Right cardiac atrium (tissue), 5 donors: ENCODE measurements at regions of chrX and their contacts with region 1.

Region 1: DNA sequence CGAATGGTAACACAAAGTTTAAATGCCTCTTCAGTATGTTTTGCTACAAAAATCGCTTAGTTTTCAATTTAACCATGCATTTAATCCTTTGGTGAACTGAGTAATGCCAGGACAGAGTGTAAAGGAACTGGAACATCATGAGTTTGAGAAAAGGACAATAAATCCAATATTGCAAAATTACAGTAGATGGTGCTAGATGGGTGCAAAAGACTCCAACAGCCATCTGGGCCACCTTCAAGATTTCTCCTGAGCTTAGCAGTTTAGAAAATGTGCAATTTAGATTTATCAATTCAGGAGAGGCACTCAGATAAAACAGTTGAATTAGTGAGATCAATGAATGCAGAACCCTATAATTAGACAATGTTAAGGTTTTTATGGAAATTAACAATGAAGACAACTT is 33.2 kb upstream of the MID1IP1 start:
- DNase-seq: no peak
- ATAC-seq: peak in 1 of 2 donors; percentile 50
- H3K4me3 ChIP-seq: no peak overlapping the region
- H3K27ac ChIP-seq: no peak overlapping the region
- H3K4me1 ChIP-seq: no peaks in the 10 kb centered on the region
- H3K27me3 ChIP-seq: no peaks in the 10 kb centered on the region

Region 2: DNA sequence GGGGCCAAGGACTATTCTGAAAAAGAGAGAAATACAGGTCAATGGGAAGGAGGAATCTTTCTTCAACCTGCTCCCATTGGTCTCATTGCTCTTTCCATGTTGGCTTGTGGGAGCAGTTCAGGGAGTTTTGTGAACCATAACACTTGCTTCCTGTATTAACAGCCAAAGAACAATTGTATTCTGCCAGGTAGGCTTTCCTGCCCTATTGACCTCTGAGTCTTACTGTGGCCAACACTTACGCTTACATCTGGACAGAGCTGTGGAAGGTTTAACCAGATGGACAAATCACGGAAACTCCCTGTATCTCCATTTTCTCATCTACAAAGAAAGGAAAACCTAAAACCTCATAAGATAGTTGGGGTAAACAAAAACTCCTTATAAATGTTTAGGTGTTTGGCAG is 63.9 kb after region 1 on chrX:
- intact Hi-C with region 1: no loop called
- DNase-seq: no peak
- ATAC-seq: no peak
- H3K4me3 ChIP-seq: no peak overlapping the region
- H3K27ac ChIP-seq: no peak overlapping the region
- H3K4me1 ChIP-seq: no peaks in the 10 kb centered on the region
- H3K27me3 ChIP-seq: no peaks in the 10 kb centered on the region

Region 3: GRCh38 chrX:38985375-38985774 is 217.3 kb after region 1 on chrX:
- intact Hi-C with region 1: loop called in 1 of 4 experiments (anchors 10 kb)
- DNase-seq: no peak
- ATAC-seq: no peak
- H3K4me3 ChIP-seq: no peak overlapping the region
- H3K27ac ChIP-seq: no peak overlapping the region
- H3K4me1 ChIP-seq: peaks cover 3% of the 10 kb centered on the region
- H3K27me3 ChIP-seq: no peaks in the 10 kb centered on the region

Region 4: DNA sequence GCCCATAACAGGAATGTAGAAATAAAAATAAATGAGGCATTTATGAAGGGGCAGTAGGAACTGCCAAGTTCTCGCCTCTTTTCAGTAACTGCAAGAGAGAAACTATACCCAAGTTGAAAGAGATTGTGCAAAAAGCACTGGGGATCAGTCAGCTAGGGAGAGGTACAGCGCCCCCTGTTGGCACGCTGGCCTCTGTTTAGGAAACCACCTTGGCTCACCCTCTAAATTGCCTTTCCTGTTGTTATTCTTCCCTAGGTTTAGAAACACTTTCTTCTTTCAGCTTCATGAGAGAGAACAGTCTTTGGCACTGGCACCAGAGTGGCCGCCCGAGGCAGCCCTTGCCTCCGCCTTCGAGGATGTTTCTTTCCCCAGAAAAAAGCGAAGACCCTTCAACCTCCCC is 381.7 kb after region 1 on chrX:
- intact Hi-C with region 1: loop called in 2 of 4 experiments (anchors 10 kb)
- DNase-seq: peak; percentile 71 to 93 (median 87)
- ATAC-seq: peak; percentile 73 to 75
- H3K4me3 ChIP-seq: no peak overlapping the region
- H3K27ac ChIP-seq: no peak overlapping the region
- H3K4me1 ChIP-seq: no peaks in the 10 kb centered on the region
- H3K27me3 ChIP-seq: no peaks in the 10 kb centered on the region